ENCODE measurements at regions of chr9 and their contacts with region 1.

Region 1: GRCh38 chr9:132534832-132535231 is 47.6 kb upstream of the BARHL1 start:
- DNase-seq: no peak

Region 2: GRCh38 chr9:132498531-132499210 is 36.2 kb before region 1 on chr9:
- intact Hi-C with region 1: no loop called
- DNase-seq: no peak

Region 3: GRCh38 chr9:132560616-132561202 is 25.9 kb after region 1 on chr9:
- intact Hi-C with region 1: no loop called
- DNase-seq: no peak

Region 4: GRCh38 chr9:132595319-132595718 is 60.5 kb after region 1 on chr9:
- intact Hi-C with region 1: loop called in 1 of 2 experiments (anchors 2 kb)
- DNase-seq: peak; percentile 29

Measured in posterior vena cava (tissue), 2 donors.